Natural killer cell (primary cell): ENCODE measurements at regions of chr3 and their contacts with region 1.

Region 1: DNA sequence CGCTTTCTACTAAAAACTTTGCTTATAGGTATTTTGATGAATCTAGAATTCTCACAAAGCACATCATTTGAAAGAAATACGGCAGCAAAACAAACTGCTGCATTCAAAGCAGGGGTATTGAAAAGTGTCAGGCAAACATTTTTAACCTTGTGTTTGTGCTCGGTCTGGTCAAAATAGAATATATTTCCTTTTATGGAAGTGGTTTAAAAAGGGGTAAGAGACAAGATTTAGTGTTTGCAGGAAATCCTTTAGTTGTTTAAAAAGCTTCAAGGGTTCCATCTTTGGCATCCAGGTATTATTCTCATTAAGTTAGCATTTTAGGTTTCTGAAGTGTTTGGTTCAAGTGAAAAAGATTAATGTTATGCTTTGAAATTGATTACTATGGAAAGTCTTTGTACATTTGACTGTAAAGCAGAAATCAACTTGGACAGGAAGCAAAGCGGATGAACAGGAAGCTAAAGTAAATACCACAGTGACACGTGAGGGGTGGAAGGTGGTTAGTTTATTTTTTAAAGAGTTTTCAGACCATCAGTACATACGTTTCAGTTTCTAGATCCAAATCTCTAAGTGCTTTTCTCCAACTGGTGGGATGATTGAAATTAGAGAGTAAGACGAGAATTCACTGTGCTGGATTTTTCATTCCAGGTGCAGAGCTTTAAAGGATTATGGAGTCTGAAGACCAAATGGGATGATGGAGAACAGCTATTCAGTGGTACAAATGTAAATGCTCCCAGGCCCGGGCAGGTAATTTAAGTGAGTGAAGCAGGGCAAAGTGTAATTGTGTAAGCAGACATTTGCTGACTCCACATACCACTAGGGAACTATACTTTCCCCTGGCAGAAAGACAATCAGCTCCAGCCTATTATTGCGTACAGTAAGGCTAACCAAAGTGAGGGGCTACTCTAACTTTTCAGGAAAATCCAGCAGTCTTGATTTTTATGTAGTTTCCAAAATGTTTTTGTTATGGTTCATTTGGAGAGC is 341.8 kb upstream of the TBL1XR1 start:
- DNase-seq: peak in 1 of 2 donors; percentile 62
- ATAC-seq: peak; percentile 57 to 90 (median 74)
- H3K4me3 ChIP-seq: no peak overlapping the region
- H3K4me3 Mint-ChIP-seq: peak overlapping the region; percentile 91
- H3K27ac ChIP-seq: peak overlapping the region; percentile 63
- H3K27ac Mint-ChIP-seq: peak overlapping the region; percentile 90 to 92
- H3K4me1 ChIP-seq: peaks cover 19% of the 10 kb centered on the region
- H3K4me1 Mint-ChIP-seq: peaks cover 31 to 47% of the 10 kb centered on the region in 2 donors
- H3K27me3 ChIP-seq: no peaks in the 10 kb centered on the region
- H3K27me3 Mint-ChIP-seq: no peaks in the 10 kb centered on the region
- CTCF ChIP-seq: no peak

Region 2: DNA sequence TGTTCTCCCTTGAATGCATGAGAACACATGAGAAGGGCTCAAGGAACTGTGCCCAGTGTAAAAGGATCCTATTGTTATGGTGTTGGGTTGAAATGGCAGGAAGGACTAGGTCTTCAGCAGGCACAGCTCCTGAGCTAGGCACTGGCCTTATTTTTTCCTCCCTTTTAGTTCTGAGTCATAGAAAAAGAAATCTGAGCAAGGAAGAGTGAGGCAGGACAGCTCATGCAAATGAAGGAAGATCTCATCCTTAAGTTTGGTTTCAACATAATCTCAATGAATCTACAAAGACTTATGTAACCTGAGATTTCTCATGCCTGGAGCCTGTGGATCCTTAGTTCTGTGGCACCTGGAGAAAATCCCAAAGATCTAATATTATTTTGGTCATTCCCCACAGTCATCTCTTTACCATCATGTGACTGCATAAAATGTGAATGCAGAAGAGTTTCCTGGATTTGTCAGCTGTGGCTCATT is 153.2 kb before region 1 on chr3:
- intact Hi-C with region 1: no loop called
- DNase-seq: no peak
- ATAC-seq: no peak
- H3K4me3 ChIP-seq: no peak overlapping the region
- H3K4me3 Mint-ChIP-seq: no peak overlapping the region
- H3K27ac ChIP-seq: no peak overlapping the region
- H3K27ac Mint-ChIP-seq: peak overlapping the region in 1 of 2 donors; percentile 16
- H3K4me1 ChIP-seq: no peaks in the 10 kb centered on the region
- H3K4me1 Mint-ChIP-seq: peaks cover 5 to 8% of the 10 kb centered on the region in 2 donors
- H3K27me3 ChIP-seq: no peaks in the 10 kb centered on the region
- H3K27me3 Mint-ChIP-seq: no peaks in the 10 kb centered on the region
- CTCF ChIP-seq: no peak

Region 3: DNA sequence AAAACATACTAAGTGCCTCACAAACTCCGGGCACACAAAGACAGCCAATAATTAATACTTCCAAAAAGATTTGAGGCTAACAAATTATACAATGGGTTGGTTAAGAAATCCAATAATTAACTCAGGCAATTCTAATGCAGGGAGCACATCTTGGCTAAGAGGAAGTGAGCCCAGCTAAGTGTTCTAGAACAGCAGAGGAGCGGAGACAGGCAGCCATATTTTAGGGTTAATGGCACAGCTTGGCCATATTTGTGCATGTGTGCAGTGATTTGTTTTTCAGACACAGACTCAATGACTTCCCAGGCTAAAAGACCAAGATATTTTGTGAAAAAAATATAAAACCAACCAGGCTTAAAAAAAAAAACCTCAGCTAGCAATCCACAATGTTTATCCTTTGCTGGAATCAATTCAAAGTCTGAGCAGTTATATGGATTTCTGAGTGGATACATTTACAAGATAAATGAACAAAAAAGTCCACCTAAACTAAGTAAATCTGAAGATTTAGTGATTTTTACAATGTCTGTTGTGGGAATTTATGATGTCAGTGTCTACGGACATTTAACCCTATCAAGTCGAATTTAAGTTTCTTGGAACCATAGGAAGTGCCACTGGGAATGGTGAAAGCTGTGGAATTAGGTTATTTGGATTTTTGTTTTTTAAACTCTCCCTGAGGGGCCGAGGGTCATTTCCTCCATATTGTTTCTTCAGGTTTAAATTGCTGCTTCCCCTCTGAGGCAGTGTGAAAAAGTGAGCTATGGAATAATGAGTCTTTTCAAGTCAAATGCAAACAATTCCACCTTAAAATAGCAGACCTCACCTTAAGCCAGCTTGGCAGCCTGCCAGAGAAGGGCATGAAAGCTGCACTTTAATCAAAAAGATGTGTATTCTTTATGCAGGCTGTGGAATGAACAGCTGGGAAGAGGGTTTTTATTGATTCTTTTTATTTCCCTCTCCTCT is 71.9 kb after region 1 on chr3:
- intact Hi-C with region 1: no loop called
- DNase-seq: peak in 1 of 2 donors; percentile 64
- ATAC-seq: no peak
- H3K4me3 ChIP-seq: no peak overlapping the region
- H3K4me3 Mint-ChIP-seq: no peak overlapping the region
- H3K27ac ChIP-seq: no peak overlapping the region
- H3K27ac Mint-ChIP-seq: no peak overlapping the region
- H3K4me1 ChIP-seq: no peaks in the 10 kb centered on the region
- H3K4me1 Mint-ChIP-seq: peaks cover 0 to 10% of the 10 kb centered on the region in 2 donors
- H3K27me3 ChIP-seq: no peaks in the 10 kb centered on the region
- H3K27me3 Mint-ChIP-seq: no peaks in the 10 kb centered on the region
- CTCF ChIP-seq: no peak

Region 4: GRCh38 chr3:177652556-177653291 is 113.7 kb after region 1 on chr3:
- intact Hi-C with region 1: loop called (anchors 5 kb)
- DNase-seq: no peak
- ATAC-seq: peak; percentile 59 to 78 (median 68)
- H3K4me3 ChIP-seq: no peak overlapping the region
- H3K4me3 Mint-ChIP-seq: peak overlapping the region; percentile 45
- H3K27ac ChIP-seq: no peak overlapping the region
- H3K27ac Mint-ChIP-seq: peak overlapping the region; percentile 60 to 74
- H3K4me1 ChIP-seq: peaks cover 12% of the 10 kb centered on the region
- H3K4me1 Mint-ChIP-seq: peaks cover 36 to 42% of the 10 kb centered on the region in 2 donors
- H3K27me3 ChIP-seq: no peaks in the 10 kb centered on the region
- H3K27me3 Mint-ChIP-seq: no peaks in the 10 kb centered on the region
- CTCF ChIP-seq: no peak